ENCODE measurements at regions of chr10 and their contacts with region 1.

Region 1: GRCh38 chr10:100518761-100519241 is 860 bp downstream of the SEC31B start:
- DNase-seq: peak; percentile 66 to 67
- ATAC-seq: peak; percentile 87
- H3K4me3 ChIP-seq: peak overlapping the region; percentile 12 to 34
- H3K27ac ChIP-seq: no peak overlapping the region
- H3K4me1 ChIP-seq: no peaks in the 10 kb centered on the region
- H3K27me3 ChIP-seq: no peaks in the 10 kb centered on the region

Region 2: DNA sequence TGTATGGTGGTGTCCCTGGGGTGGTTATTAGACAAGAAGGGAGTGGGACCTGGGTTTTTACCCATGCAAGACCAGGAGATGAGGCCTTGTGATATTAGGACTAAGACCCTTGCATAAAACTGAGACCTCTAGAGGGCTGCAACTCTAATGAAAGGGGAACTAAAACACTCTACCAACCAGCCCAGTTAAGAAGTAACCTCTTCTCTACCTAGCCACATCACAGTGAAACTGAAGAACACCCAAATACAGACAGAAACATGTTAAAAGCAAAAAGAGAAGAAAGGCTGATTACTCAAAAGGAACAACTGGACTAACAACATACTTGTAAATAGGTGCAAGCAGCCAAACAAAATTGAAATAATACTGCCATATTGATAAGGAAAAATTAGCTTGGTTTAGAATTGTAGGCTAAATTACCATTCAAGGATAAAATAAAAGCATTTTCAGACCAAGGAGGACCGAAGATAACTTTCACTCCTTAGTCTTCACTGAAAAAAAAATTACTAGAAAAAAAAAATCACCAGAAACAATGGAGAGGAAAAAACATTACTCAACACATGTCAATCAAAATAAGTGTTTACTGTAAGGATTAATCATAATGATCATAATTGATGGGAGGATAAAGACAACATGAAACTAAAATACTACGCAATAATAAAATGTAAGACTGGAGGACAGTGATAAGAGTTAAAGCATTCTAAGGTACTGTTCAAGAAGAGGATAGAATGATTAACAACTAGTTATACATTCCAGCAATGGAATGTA is 360.6 kb before region 1 on chr10:
- intact Hi-C with region 1: no loop called
- DNase-seq: no peak
- ATAC-seq: no peak
- H3K4me3 ChIP-seq: no peak overlapping the region
- H3K27ac ChIP-seq: no peak overlapping the region
- H3K4me1 ChIP-seq: no peaks in the 10 kb centered on the region
- H3K27me3 ChIP-seq: no peaks in the 10 kb centered on the region

Region 3: GRCh38 chr10:100338434-100339036 is 180.3 kb before region 1 on chr10:
- intact Hi-C with region 1: loop called in 1 of 2 experiments (anchors 2 kb)
- DNase-seq: peak; percentile 82 to 90
- ATAC-seq: peak; percentile 89
- H3K4me3 ChIP-seq: no peak overlapping the region
- H3K27ac ChIP-seq: no peak overlapping the region
- H3K4me1 ChIP-seq: no peaks in the 10 kb centered on the region
- H3K27me3 ChIP-seq: no peaks in the 10 kb centered on the region

Region 4: DNA sequence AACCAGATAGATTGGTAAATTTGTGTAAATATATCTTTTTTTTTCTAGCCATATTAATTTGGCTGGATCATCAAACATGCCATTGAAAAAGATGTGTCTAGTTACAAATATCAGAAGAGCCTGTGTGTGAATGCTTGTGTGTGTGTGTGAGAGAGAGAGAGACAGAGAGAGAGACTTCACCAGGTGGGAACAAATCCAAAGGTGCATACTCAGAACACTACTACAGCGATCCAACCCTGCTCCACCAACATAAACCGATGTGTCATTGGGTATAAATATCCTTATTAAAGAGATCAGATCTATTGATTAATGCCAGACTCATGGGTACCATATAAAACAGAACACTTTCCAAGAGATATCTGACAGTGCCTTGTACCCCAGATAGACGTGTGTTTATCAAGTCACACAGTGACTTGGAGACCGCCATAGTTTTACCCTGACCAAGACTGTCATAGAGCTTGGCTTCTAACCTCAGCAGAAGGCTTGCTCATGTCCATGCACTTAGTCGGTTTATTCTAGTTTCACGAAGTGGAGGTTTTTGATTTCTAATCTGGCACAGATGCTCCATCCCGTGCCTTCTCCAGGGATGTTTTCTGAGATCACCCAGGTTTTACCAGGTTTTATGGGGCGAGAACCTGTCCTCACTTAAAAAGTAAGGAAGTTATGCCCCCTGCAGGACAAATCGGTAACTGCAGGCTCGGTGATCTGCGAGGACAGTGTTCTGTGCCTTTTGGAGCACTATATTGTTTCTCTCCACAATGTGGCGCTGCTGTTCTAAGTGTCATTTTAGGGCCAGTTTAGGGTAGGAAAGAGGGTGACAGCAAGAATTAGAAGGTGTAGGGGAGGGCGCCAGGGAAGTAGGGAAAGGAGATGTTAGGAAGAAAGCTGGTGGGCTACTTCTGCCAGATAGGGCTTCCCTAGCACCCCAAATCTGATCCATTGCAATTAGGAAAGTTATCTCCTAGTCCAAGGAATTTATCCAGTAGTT is 85.3 kb before region 1 on chr10:
- intact Hi-C with region 1: loop called in 1 of 2 experiments (anchors 10 kb)
- DNase-seq: peak; percentile 92 to 94
- ATAC-seq: peak; percentile 94
- H3K4me3 ChIP-seq: no peak overlapping the region
- H3K27ac ChIP-seq: no peak overlapping the region
- H3K4me1 ChIP-seq: no peaks in the 10 kb centered on the region
- H3K27me3 ChIP-seq: no peaks in the 10 kb centered on the region

Measured in aorta (tissue), 5 donors.